AG04450 (cell line): ENCODE measurements at regions of chr5 and their contacts with region 1.

Region 1: DNA sequence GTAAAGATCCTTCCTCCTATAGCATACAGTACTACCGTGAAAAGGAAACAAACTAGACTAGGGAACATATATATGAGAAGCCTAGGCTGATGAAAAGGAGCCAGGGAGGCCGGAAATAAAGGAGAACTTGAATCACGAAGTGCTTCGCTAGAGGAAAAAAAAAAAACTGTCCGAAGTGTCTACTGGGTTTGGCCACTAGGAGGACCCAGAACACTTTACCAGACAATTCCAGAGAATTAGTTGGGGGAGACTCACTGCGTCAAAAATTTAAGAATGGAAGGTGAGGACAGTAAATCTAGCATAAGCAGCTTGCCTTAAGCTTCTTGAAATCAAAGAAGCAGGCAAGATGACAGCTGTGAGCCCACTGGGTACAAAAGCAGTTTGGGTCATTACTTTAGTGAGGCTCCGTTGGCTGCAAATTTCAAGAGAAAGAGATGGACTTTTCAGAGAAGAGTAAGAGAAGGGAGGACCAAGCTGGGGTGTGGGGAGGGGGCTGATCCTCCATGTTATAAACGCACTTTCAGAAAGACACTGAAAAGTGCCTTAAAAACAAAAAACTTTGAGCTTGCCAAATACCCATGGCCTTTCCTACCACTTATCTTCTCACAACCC is 47.4 kb downstream of the P4HA2 start:
- DNase-seq: peak; percentile 29
- H3K4me3 ChIP-seq: no peak overlapping the region
- H3K27ac ChIP-seq: no peak overlapping the region
- H3K27me3 ChIP-seq: no peaks in the 10 kb centered on the region
- CTCF ChIP-seq: peak; percentile 87

Region 2: DNA sequence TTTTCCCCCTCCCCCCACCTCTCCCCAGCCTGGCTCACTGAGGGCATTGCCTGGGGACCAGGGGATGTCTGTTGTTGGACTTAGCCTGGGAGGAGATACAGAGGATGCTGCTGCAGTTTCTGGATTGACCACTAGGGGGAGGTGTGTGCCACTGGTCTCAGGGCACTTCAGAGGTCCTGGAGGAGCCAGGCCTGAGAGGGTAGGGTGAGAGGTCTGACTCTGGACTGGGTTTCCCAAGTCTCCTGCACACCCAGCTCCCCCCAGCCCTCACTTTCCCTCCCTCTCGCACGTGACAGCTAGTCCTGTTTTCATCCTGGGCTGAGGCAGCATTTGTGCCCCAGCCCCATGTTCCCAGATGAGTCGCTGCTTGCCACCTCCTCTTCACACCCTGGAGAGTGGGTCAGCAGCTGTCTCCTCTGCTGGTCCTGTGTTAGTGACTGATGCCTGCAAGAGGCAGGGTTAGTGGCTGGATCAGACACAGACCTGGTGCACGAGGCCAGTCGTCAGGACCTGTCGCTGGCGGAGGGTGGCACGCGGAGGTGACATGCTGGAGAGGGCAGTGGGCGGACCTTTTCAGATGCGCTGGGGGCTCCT is 115.4 kb before region 1 on chr5:
- CTCF ChIA-PET with region 1: interaction called, 50 read pairs
- POLR2A ChIA-PET with region 1: no interaction called
- DNase-seq: peak; percentile 43
- H3K4me3 ChIP-seq: no peak overlapping the region
- H3K27ac ChIP-seq: no peak overlapping the region
- H3K27me3 ChIP-seq: peaks cover 4% of the 10 kb centered on the region
- CTCF ChIP-seq: peak; percentile 93

Region 3: GRCh38 chr5:132105688-132106087 is 74.6 kb before region 1 on chr5:
- CTCF ChIA-PET with region 1: interaction called, 13 read pairs
- POLR2A ChIA-PET with region 1: no interaction called
- DNase-seq: no peak
- H3K4me3 ChIP-seq: no peak overlapping the region
- H3K27ac ChIP-seq: no peak overlapping the region
- H3K27me3 ChIP-seq: no peaks in the 10 kb centered on the region
- CTCF ChIP-seq: no peak